Posterior cingulate gyrus (tissue), 11 donors: ENCODE measurements at regions of chr12 and their contacts with region 1.

Region 1: DNA sequence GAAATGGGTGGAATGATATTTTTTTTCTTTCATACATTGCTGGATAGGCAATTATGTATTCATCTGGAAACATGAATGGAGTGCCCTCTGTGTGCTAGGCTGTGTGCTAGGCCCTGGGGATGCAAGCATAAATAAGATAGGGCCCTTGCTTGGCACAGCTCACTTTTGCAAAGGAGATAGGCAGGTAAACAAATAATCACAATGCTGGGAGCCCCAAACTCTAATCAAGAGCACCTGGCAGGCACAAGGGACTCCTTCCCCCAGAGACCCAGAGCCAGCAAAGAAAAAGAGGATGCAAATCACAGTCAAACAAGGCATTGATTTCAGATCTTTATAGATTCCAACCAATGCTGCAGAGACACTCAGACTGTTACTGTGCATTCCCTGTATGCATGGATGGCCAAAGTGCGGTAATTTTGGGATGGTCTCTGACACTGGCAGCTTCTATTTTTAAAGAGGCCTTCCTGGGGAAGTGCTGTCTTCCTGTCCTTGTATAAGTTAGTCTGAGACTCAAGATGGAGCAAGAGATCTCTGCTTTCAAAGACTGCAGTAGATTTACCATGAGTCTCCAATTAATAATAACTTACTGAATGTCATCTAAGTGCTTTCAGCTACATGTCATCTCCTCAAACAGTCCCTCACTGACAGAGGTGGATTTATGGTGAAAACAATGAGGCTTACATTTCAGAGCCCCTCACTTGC is 45.1 kb upstream of the CPM start:
- DNase-seq: no peak

Region 2: GRCh38 chr12:68932961-68933893 is 44.8 kb before region 1 on chr12 and contains the start of gene CPM:
- intact Hi-C with region 1: loop called (anchors 5 kb)
- DNase-seq: peak; percentile 43 to 97 (median 66)

Region 3: GRCh38 chr12:69059483-69060457 is 81.7 kb after region 1 on chr12:
- intact Hi-C with region 1: loop called (anchors 5 kb)
- DNase-seq: no peak

Region 4: GRCh38 chr12:69655377-69656336 is 677.6 kb after region 1 on chr12:
- intact Hi-C with region 1: no loop called
- DNase-seq: no peak